ENCODE measurements at regions of chr9 and their contacts with region 1.

Region 1: GRCh38 chr9:133375724-133376654 is at the starts of genes STKLD1 and SURF4:
- DNase-seq: peak; percentile 75 to 98
- H3K4me3 ChIP-seq: peak within 1 kb of the TSS; percentile 97 to 98
- H3K27ac ChIP-seq: peak within 1 kb of the TSS; percentile 94 to 97
- H3K4me1 ChIP-seq: peaks cover 7 to 26% of the 10 kb centered on the region in 2 donors
- H3K27me3 ChIP-seq: no peaks in the 10 kb centered on the region
- CTCF ChIP-seq: peak in 1 of 3 experiments; percentile 18
- total RNA-seq, gene STKLD1: not detected
- total RNA-seq, gene SURF4: 161 TPM

Region 2: DNA sequence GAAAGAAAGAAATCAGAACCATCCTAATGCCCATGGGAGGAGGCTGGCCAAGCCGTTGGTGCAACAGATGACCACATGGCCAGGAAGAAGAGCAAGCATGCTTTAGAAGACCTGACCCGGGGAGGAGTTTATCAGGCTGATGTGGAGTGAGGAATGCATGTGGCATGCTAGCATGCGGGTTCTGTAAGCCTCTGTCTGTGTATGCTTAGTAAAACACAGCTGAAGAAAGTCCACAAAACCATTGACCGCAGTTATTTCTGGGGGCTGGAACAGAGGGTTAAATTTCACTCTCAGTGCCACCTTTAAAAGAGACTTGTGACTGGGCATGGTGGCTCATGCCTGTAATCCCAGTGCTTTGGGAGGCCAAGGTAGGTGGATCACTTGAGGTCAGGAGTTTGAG is 378.4 kb before region 1 on chr9:
- intact Hi-C with region 1: no loop called
- DNase-seq: no peak
- H3K4me3 ChIP-seq: no peak overlapping the region
- H3K27ac ChIP-seq: no peak overlapping the region
- H3K4me1 ChIP-seq: no peaks in the 10 kb centered on the region
- H3K27me3 ChIP-seq: no peaks in the 10 kb centered on the region
- CTCF ChIP-seq: no peak

Region 3: DNA sequence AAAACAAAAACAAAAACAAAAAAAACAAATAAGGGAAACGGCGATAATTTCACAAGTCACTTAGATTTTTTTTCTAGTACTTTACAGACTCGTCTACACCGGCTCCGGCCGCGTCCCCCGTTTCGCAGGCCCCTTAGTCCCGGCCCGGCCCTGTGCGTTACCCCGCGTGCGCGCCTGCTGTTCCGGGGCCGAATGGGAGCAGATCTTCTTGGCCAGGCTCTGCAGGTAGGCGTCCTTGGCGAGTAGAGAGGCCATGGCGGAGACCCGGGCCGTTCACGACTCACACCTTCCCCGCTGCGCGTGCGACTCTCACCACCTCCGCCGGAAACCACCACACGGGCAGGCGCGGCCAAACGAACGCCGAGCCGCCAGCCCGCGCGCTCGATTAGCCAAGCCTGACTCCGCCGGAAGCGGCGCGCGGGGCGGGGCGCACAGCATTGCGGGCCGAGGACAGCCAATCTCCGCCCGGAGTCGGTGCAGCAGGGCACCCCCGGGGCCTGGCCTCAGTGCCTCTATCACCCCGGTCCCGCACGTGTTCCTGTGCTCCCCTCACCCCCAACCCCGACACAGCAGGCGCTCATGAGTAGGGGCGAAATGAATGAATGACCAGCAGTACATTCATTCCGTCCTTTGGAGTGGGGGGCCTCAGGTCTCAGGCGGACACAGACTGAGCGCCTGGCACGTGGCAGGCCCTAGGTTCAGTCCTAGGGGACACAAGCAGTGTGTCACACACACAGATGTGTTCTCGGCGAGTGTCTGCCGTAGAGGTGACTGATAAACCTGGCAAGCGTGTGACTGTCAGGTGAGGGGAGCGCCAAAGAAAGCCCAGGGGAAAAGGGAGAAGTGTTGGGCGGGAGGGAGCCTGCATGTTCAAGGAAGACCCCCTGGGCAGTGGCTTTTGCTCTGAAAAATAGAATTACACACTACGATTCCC is 39.8 kb before region 1 on chr9 and contains the start of gene SURF6:
- intact Hi-C with region 1: loop called (anchors 1 kb)
- DNase-seq: peak; percentile 46 to 93
- H3K4me3 ChIP-seq: peak within 1 kb of the TSS; percentile 80 to 91
- H3K27ac ChIP-seq: peak within 1 kb of the TSS; percentile 50 to 57
- H3K4me1 ChIP-seq: peaks cover 11 to 19% of the 10 kb centered on the region in 2 donors
- H3K27me3 ChIP-seq: no peaks in the 10 kb centered on the region
- CTCF ChIP-seq: no peak
- total RNA-seq, gene SURF6: 5.3 TPM

Region 4: GRCh38 chr9:133347985-133348717 is 27.8 kb before region 1 on chr9 and contains the starts of genes MED22 and RPL7A:
- intact Hi-C with region 1: loop called (anchors 1 kb)
- DNase-seq: peak; percentile 86 to 97
- H3K4me3 ChIP-seq: peak within 1 kb of the TSS; percentile 69 to 80
- H3K27ac ChIP-seq: peak within 1 kb of the TSS; percentile 86 to 94
- H3K4me1 ChIP-seq: peaks cover 6 to 22% of the 10 kb centered on the region in 2 donors
- H3K27me3 ChIP-seq: no peaks in the 10 kb centered on the region
- CTCF ChIP-seq: peak in 1 of 3 experiments; percentile 9
- total RNA-seq, gene MED22: 52.2 TPM
- total RNA-seq, gene RPL7A: 1,203 TPM

Region 5: GRCh38 chr9:133356391-133357091 is 19.4 kb before region 1 on chr9 and contains the starts of genes SURF1 and SURF2:
- intact Hi-C with region 1: loop called (anchors 2 kb)
- DNase-seq: peak; percentile 52 to 92
- H3K4me3 ChIP-seq: peak within 1 kb of the TSS; percentile 70 to 87
- H3K27ac ChIP-seq: peak within 1 kb of the TSS; percentile 47 to 72
- H3K4me1 ChIP-seq: peaks cover 10 to 16% of the 10 kb centered on the region in 2 donors
- H3K27me3 ChIP-seq: no peaks in the 10 kb centered on the region
- CTCF ChIP-seq: no peak
- total RNA-seq, gene SURF1: 19.9 TPM
- total RNA-seq, gene SURF2: 4.4 TPM

Region 6: GRCh38 chr9:133417541-133418461 is 41.8 kb after region 1 on chr9 and contains the start of gene REXO4:
- intact Hi-C with region 1: loop called (anchors 1 kb)
- DNase-seq: peak; percentile 21 to 91
- H3K4me3 ChIP-seq: peak within 1 kb of the TSS; percentile 79 to 91
- H3K27ac ChIP-seq: peak within 1 kb of the TSS; percentile 78
- H3K4me1 ChIP-seq: peaks cover 0 to 21% of the 10 kb centered on the region in 2 donors
- H3K27me3 ChIP-seq: no peaks in the 10 kb centered on the region
- CTCF ChIP-seq: no peak
- total RNA-seq, gene REXO4: 29.4 TPM

Region 7: GRCh38 chr9:133459476-133460404 is 83.8 kb after region 1 on chr9 and contains the start of gene CACFD1:
- intact Hi-C with region 1: loop called (anchors 1 kb)
- DNase-seq: peak; percentile 88 to 98
- H3K4me3 ChIP-seq: peak within 1 kb of the TSS; percentile 63 to 90
- H3K27ac ChIP-seq: peak within 1 kb of the TSS; percentile 81 to 91
- H3K4me1 ChIP-seq: peaks cover 0 to 12% of the 10 kb centered on the region in 2 donors
- H3K27me3 ChIP-seq: no peaks in the 10 kb centered on the region
- CTCF ChIP-seq: no peak
- total RNA-seq, gene CACFD1: 24.8 TPM

Region 8: DNA sequence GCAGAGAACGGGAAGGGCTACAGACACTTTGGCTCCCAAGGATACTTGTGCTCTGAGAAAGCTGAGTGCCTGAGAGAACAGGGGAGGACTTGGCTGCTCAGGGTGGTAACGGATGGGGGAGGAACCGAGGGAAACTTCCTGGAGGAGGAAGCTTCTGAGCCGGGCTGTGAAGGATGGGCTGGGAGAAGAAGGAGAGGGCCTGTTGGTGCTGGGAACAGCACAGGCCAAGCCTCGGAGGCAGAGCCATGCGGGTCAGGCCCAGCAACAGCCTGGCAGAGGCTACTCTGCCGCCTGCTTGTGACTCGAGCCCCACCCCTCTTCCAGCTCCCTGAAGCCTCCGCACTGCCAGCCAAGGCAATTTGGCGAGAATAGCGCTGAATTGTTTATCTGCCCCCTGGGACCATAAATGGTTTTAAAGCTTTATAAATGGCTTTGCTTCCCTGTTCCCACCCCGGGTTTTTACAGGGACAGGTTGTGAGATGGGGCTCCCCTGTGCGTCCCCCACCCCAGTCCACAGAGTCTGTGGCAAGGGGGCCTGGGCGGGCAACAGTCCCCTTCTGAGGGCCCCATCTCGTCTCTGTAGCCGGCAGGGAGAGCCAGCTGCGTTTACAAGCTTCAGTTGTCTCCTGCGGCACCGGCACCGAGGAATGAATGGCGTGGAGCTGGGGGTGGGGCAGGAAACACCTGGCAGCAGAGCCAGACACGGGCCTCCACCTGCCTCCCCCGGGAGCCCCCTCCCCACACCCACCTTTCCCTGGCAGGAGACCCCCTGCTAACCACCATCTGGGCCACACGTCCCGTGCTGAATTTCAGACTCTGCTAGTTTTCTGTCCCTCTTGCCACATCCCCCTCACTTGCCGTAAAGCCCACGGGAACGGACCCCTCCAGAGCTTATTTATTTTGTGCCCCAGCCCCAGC is 208.8 kb after region 1 on chr9:
- intact Hi-C with region 1: no loop called
- DNase-seq: no peak
- H3K4me3 ChIP-seq: peak overlapping the region in 1 of 2 donors; percentile 5
- H3K27ac ChIP-seq: no peak overlapping the region
- H3K4me1 ChIP-seq: peaks cover 3 to 8% of the 10 kb centered on the region in 2 donors
- H3K27me3 ChIP-seq: peaks cover 7% of the 10 kb centered on the region
- CTCF ChIP-seq: no peak

Measured in ascending aorta (tissue), 2 donors.